MCF 10A (cell line): ENCODE measurements at regions of chr7 and their contacts with region 1.

Region 1: DNA sequence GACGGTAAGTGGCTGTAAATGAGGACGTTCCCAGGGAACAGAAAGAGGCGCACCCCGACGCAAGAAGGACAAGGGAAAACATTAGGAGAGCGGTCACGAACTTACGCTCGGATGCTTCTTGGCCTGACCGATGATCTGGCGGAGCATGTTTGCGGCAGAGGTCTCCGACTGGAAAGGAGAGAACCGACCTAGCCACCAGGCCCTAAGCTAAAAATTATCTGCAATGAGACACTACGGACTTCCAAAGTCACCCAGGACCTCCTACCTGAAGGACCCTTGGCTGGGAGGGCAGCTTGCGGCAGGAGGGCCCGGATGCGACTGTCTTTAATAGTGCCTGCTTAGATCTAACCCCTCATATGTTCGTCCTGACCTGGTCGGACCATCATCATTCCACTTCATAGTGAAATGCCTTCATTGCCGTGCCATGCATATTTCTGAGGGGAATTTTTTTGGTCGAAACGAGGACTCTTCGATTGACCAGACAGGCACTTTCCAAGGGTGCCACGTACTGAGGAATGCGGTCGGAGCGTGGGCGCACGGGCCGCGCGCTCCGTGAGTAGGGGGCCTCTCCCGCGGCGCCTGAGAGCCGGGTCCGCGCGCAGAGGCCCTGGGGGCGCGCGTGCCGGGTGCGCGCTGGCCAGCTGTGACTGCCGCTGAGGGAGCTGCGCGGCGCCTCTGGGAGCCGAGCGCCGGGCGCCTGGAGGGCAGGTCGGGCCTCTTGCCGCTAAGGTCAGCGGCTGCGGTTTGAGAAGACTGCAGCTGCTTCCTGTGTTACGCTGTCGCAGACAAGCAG is 33.6 kb upstream of the PHF14 start:
- DNase-seq: peak; percentile 94
- H3K4me3 Mint-ChIP-seq: no peak overlapping the region
- H3K27ac Mint-ChIP-seq: no peak overlapping the region
- H3K4me1 Mint-ChIP-seq: peaks cover 3% of the 10 kb centered on the region
- H3K27me3 Mint-ChIP-seq: no peaks in the 10 kb centered on the region
- CTCF ChIP-seq: no peak

Region 2: DNA sequence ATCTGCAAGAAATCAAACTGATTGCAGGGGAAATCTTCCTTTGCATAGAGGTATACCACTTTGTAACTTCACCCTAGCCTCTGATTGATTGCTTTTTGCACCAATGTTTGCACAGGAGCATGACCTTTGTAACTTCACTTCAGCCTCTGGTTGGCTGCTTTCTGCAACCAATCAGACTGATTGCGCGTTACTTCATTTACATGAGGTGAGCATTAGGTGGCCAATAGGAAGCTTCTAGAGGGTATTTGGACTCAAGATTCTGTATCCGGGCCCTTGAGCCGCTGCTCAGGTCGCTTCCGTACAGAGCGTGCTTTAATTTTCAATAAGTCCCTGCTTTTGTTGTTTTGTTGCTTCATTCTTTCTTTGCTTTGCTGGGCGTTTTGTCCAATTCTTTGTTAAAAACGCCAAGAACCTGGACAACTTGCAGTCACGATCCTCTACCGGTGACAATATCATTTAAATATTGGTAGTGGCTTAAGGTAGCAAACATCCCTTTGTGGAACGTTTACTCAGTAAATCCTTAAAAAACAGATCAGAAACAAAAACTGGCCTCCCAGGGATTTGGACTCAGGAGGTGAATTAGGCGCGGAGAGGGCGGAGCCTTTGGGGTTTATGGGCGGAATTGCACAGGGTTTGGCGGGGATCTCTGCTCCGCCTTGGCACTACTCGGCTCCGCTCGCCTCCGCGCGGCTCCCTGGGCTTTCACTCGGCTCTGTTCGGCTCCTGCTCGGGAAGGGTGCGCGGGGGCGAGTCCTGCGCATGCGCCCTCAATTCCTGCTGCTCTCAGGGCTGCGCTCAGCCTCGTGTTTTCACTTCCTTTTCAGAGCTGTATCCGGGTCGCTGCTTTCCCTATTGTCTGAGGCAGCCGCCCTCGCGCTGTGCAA is 33.2 kb after region 1 on chr7 and contains the start of gene PHF14:
- CTCF ChIA-PET with region 1: no interaction called
- POLR2A ChIA-PET with region 1: interaction called, 119 read pairs
- intact Hi-C with region 1: loop called (anchors 1 kb)
- DNase-seq: peak; percentile 97
- H3K4me3 Mint-ChIP-seq: peak within 1 kb of the TSS; percentile 80
- H3K27ac Mint-ChIP-seq: peak within 1 kb of the TSS; percentile 90
- H3K4me1 Mint-ChIP-seq: peaks cover 10% of the 10 kb centered on the region
- H3K27me3 Mint-ChIP-seq: no peaks in the 10 kb centered on the region
- CTCF ChIP-seq: no peak
- total RNA-seq, gene PHF14: 25.3 and 39.6 TPM in 2 replicates